Heart right ventricle (tissue), 16 donors: ENCODE measurements at regions of chr12 and their contacts with region 1.

Region 1: GRCh38 chr12:54398995-54399793 is 14.7 kb upstream of the ZNF385A start:
- DNase-seq: peak; percentile 87
- ATAC-seq: peak; percentile 80 to 89 (median 86)
- H3K4me3 ChIP-seq: no peak overlapping the region
- H3K27ac ChIP-seq: no peak overlapping the region
- H3K4me1 ChIP-seq: peaks cover 0 to 13% (median 3%) of the 10 kb centered on the region in 9 donors
- H3K27me3 ChIP-seq: no peaks in the 10 kb centered on the region
- CTCF ChIP-seq: peak; percentile 91 to 100 (median 99)

Region 2: DNA sequence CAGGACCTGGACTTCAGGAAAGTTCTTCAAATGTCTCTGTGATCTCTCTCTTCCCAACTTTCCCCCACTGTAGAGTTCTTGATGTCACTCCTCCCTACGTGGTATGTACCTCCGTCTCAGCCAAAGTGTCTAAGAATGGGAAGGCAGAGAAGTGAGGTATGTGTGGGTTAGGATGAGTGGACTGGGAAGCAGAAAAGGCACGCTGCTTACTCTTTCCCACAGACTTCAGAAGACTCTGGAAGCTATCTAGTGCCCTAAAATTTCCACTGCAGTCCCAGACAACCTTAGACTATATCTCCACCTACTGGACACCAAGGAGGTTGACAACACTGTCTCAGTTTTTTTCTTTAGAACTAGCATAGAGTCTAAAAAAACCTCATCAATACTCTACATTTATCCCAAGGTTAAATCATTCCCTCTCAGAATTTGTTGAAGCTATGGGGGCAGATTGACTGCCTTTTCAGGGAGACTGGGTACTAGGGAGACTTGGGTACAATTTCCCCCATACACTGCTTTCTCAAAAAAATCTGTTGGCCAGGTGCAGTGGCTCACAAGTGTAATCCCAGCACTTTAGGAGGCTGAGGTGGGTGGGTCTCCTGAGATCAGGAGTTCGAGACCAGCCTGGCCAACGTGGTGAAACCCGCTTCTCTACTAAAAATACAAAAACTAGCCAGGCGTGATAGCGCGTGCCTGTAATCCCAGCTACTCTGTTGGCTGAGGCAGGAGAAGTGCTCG is 40.5 kb after region 1 on chr12:
- intact Hi-C with region 1: loop called (anchors 1 to 2 kb)
- DNase-seq: peak in 1 of 2 donors; percentile 16
- ATAC-seq: peak; percentile 85 to 93 (median 92)
- H3K4me3 ChIP-seq: no peak overlapping the region
- H3K27ac ChIP-seq: peak overlapping the region in 2 of 10 donors; percentile 11 to 49
- H3K4me1 ChIP-seq: peaks cover 0 to 15% (median 5%) of the 10 kb centered on the region in 9 donors
- H3K27me3 ChIP-seq: no peaks in the 10 kb centered on the region
- CTCF ChIP-seq: peak; percentile 69 to 92 (median 84)